ENCODE measurements at regions of chr10 and their contacts with region 1.

Region 1: GRCh38 chr10:30456266-30456665 is 22.3 kb downstream of the MAP3K8 start:
- DNase-seq: peak; percentile 14
- H3K4me3 Mint-ChIP-seq: peak overlapping the region; percentile 37
- H3K27ac Mint-ChIP-seq: peak overlapping the region; percentile 51
- H3K4me1 Mint-ChIP-seq: peaks cover 47% of the 10 kb centered on the region
- H3K27me3 Mint-ChIP-seq: no peaks in the 10 kb centered on the region

Region 2: GRCh38 chr10:30493609-30494530 is 37.6 kb after region 1 on chr10:
- intact Hi-C with region 1: loop called (anchors 5 kb)
- DNase-seq: no peak
- H3K4me3 Mint-ChIP-seq: peak overlapping the region; percentile 8
- H3K27ac Mint-ChIP-seq: peak overlapping the region; percentile 30
- H3K4me1 Mint-ChIP-seq: peaks cover 86% of the 10 kb centered on the region
- H3K27me3 Mint-ChIP-seq: peaks cover 5% of the 10 kb centered on the region